OCI-LY7 (cell line): ENCODE measurements at regions of chr2 and their contacts with region 1.

Region 1: DNA sequence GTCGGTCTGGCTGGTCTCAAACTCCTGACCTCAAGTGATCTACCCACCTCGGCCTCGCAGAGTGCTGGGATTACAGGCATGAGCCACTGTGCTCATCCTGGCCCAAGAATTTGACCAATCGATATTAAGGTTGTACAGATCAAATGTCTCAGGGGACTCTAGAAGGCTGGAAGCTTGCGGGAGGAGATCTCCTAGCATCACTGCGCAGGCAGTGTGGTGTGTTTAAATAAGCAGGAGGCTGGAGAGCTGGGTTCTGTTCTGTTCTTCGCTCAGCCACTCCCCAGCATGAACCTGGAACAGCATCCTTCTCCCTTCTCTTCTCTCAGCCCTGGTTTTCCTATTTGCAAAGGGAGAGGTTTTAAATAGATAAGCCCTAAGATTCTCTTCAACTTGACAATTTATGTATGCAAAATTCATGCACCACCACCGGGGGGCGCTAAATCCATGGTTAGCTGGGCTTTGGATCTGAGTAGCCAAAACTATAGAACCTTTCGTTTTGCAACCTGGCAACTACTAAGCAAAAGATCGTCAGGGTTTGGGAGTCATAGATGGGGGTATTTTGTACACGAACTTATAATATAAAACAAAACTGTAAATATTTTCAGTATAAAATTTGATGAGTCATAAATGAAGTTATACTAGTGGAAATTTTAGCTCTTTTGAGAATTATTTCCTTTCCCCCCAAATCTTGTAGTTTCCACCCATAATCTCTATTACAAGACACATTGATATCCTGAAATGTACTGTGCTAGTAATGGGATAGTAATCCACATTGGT is 60.6 kb downstream of the SLC16A14 start:
- DNase-seq: peak; percentile 62
- H3K4me3 ChIP-seq: no peak overlapping the region
- H3K27ac ChIP-seq: no peak overlapping the region
- H3K4me1 ChIP-seq: no peaks in the 10 kb centered on the region
- CTCF ChIP-seq: peak; percentile 94

Region 2: GRCh38 chr2:230160112-230160660 is 152.1 kb after region 1 on chr2:
- CTCF ChIA-PET with region 1: no interaction called
- POLR2A ChIA-PET with region 1: no interaction called
- intact Hi-C with region 1: loop called (anchors 5 kb)
- DNase-seq: peak; percentile 49
- H3K4me3 ChIP-seq: no peak overlapping the region
- H3K27ac ChIP-seq: no peak overlapping the region
- H3K4me1 ChIP-seq: no peaks in the 10 kb centered on the region
- CTCF ChIP-seq: peak; percentile 86

Region 3: DNA sequence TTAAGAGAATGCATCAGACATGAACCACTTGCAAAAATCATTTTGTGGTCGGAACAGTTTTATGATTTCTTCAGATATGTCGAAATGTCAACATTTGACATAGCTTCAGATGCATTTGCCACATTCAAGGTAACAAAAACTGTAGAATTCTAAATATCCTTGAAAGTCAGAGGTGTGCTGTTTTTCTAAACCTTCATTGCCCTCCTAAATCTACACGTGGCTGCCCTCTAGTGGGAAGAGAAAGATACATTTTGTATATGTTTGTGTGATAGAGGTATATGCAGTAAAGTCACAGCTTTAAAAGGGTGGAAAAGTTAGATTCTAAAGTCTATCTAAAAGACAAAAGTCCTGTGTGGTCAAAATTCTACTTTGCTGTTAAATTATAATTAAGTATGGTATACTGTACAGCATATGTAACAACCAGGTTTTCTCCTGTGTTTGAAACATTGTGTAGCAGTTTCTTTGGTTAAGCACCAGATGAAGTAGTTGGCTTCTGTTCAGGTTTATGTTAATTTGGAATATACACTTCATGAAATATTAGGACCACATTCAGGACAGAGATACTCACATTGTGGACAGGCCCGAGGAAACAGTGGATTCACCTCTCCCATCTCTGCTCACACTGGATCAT is 790.8 kb after region 1 on chr2:
- CTCF ChIA-PET with region 1: no interaction called
- POLR2A ChIA-PET with region 1: no interaction called
- intact Hi-C with region 1: loop called (anchors 5 kb)
- DNase-seq: peak; percentile 70
- H3K4me3 ChIP-seq: no peak overlapping the region
- H3K27ac ChIP-seq: no peak overlapping the region
- H3K4me1 ChIP-seq: peaks cover 27% of the 10 kb centered on the region
- CTCF ChIP-seq: peak; percentile 98